Right ventricle myocardium inferior (tissue), 1 donor: ENCODE measurements at regions of chr12 and their contacts with region 1.

Region 1: GRCh38 chr12:28303192-28303591 is 112.9 kb downstream of the CCDC91 start:
- DNase-seq: no peak
- ATAC-seq: no peak

Region 2: GRCh38 chr12:28278499-28278898 is 24.7 kb before region 1 on chr12:
- intact Hi-C with region 1: loop called (anchors 1 kb)
- DNase-seq: no peak
- ATAC-seq: no peak

Region 3: GRCh38 chr12:29519585-29520182 is 1216.5 kb after region 1 on chr12:
- intact Hi-C with region 1: no loop called
- DNase-seq: no peak
- ATAC-seq: no peak